PC-3 (cell line): ENCODE measurements at regions of chr3 and their contacts with region 1.

Region 1: GRCh38 chr3:17742108-17742879 is at the start of gene TBC1D5:
- DNase-seq: peak; percentile 99
- ATAC-seq: peak; percentile 82
- H3K4me3 ChIP-seq: peak within 1 kb of the TSS; percentile 75
- H3K27ac ChIP-seq: peak within 1 kb of the TSS; percentile 79
- H3K4me1 ChIP-seq: peaks cover 24% of the 10 kb centered on the region
- H3K27me3 ChIP-seq: no peaks in the 10 kb centered on the region
- CTCF ChIP-seq: no peak
- total RNA-seq, gene TBC1D5: 54.4 and 54.5 TPM in 2 replicates

Region 2: GRCh38 chr3:17505856-17506255 is 236.4 kb before region 1 on chr3:
- CTCF ChIA-PET with region 1: no interaction called
- POLR2A ChIA-PET with region 1: no interaction called
- intact Hi-C with region 1: loop called (anchors 5 kb)
- DNase-seq: peak; percentile 40
- ATAC-seq: peak; percentile 71
- H3K4me3 ChIP-seq: no peak overlapping the region
- H3K27ac ChIP-seq: no peak overlapping the region
- H3K4me1 ChIP-seq: peaks cover 19% of the 10 kb centered on the region
- H3K27me3 ChIP-seq: no peaks in the 10 kb centered on the region
- CTCF ChIP-seq: no peak

Region 3: GRCh38 chr3:17645072-17645698 is 97.1 kb before region 1 on chr3:
- CTCF ChIA-PET with region 1: interaction called, 11 read pairs
- POLR2A ChIA-PET with region 1: no interaction called
- intact Hi-C with region 1: loop called (anchors 1 kb)
- DNase-seq: peak; percentile 85
- ATAC-seq: peak; percentile 89
- H3K4me3 ChIP-seq: no peak overlapping the region
- H3K27ac ChIP-seq: no peak overlapping the region
- H3K4me1 ChIP-seq: peaks cover 4% of the 10 kb centered on the region; the same call in 1 of the 2 replicates
- H3K27me3 ChIP-seq: no peaks in the 10 kb centered on the region
- CTCF ChIP-seq: peak; percentile 85

Region 4: GRCh38 chr3:17724948-17725347 is 17.3 kb before region 1 on chr3:
- CTCF ChIA-PET with region 1: no interaction called
- POLR2A ChIA-PET with region 1: interaction called, 11 read pairs
- intact Hi-C with region 1: no loop called
- DNase-seq: no peak
- ATAC-seq: no peak
- H3K4me3 ChIP-seq: no peak overlapping the region
- H3K27ac ChIP-seq: no peak overlapping the region
- H3K4me1 ChIP-seq: peaks cover under 1% of the 10 kb centered on the region
- H3K27me3 ChIP-seq: no peaks in the 10 kb centered on the region
- CTCF ChIP-seq: no peak

Region 5: DNA sequence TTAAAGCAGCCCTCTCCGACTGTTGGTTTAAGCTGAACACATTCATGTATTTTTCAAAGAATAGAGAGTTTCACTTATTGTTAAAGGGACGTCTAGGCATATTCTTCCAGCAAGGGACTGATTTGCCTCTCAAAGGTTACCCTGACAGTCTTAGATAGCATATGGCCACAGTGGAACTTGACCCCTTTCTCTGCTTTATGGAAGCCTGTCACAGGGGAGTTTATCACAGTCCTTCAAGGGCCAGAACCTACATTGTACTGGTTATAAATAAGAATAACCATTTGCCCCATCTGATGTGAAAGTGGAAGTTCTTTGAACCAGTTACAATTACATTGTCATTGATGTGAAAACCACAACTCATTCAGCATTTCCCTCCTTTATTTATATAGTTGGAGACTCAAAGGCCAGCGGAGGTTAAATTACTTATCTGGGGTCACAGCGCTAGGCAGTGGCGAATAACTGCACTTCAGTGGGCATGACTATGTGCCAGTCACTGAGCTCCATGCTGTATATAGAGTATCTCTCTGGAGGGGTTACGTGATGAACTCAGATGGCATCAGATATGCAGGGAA is 60.6 kb after region 1 on chr3:
- CTCF ChIA-PET with region 1: no interaction called
- POLR2A ChIA-PET with region 1: interaction called, 18 read pairs
- intact Hi-C with region 1: no loop called
- DNase-seq: no peak
- ATAC-seq: no peak
- H3K4me3 ChIP-seq: no peak overlapping the region
- H3K27ac ChIP-seq: no peak overlapping the region
- H3K4me1 ChIP-seq: peaks cover 22% of the 10 kb centered on the region
- H3K27me3 ChIP-seq: no peaks in the 10 kb centered on the region
- CTCF ChIP-seq: no peak

Region 6: DNA sequence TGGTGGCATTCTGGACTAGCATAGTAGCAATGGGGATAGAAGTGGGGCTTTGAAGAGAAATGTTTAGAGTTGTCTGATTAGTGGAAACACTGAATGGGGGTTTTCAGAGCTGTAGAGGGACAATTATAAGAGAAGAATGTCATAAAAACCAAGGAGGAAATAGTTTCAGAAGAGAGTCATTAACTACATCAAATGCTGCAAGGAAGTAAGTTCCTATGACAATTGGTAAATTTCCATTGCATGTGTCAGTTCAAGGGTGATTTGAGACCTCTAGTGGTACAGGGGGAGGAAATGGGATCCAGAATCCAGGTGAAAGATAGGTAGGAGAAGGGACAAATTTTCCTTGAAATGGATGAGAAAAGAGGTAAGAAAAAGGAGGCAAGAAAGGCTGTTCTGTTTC is 68.5 kb after region 1 on chr3:
- CTCF ChIA-PET with region 1: interaction called, 4 read pairs
- POLR2A ChIA-PET with region 1: no interaction called
- intact Hi-C with region 1: loop called (anchors 1 kb)
- DNase-seq: peak; percentile 83
- ATAC-seq: peak; percentile 62
- H3K4me3 ChIP-seq: no peak overlapping the region
- H3K27ac ChIP-seq: peak overlapping the region; percentile 50
- H3K4me1 ChIP-seq: peaks cover 40% of the 10 kb centered on the region
- H3K27me3 ChIP-seq: no peaks in the 10 kb centered on the region
- CTCF ChIP-seq: peak; percentile 68